Panc1 (cell line): ENCODE measurements at regions of chr15 and their contacts with region 1.

Region 1: GRCh38 chr15:58095415-58095814 is 29.9 kb upstream of the ALDH1A2 start:
- DNase-seq: no peak
- ATAC-seq: no peak
- H3K4me3 ChIP-seq: no peak overlapping the region
- H3K27ac ChIP-seq: no peak overlapping the region
- H3K4me1 ChIP-seq: no peaks in the 10 kb centered on the region
- H3K27me3 ChIP-seq: no peaks in the 10 kb centered on the region
- CTCF ChIP-seq: no peak

Region 2: GRCh38 chr15:58146749-58147148 is 51.3 kb after region 1 on chr15:
- CTCF ChIA-PET with region 1: interaction called, 11 read pairs
- POLR2A ChIA-PET with region 1: no interaction called
- in situ Hi-C with region 1: no loop called
- intact Hi-C with region 1: no loop called
- DNase-seq: peak; percentile 28
- ATAC-seq: no peak
- H3K4me3 ChIP-seq: no peak overlapping the region
- H3K27ac ChIP-seq: no peak overlapping the region
- H3K4me1 ChIP-seq: no peaks in the 10 kb centered on the region
- H3K27me3 ChIP-seq: 0 out of 2 replicates have a peak, but pooled peaks cover 2% of the 10 kb centered on the region
- CTCF ChIP-seq: no peak